ENCODE measurements at regions of chr10 and their contacts with region 1.

Region 1: DNA sequence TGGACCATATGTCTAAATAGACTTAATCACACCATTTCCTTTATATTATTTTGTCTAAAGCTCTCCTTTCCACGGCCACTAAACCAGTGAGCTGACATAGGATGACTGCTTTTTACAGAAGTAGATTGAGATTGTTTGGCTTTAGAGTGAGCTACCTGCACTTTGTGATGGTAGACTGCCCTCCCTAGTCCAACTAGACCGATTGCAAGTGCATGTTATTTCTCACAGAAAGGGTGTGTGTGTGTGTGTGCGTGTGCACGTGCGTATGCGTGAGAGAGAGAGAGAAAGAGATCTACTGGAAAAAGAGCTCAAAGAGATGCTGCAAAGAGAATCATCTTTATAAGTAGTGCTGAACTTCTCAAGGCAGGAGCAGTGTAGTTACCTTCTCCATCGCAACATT is 60.7 kb downstream of the VCL start:
- DNase-seq: peak; percentile 58
- ATAC-seq: peak; percentile 43
- H3K4me3 Mint-ChIP-seq: no peak overlapping the region
- H3K27ac Mint-ChIP-seq: no peak overlapping the region
- H3K4me1 Mint-ChIP-seq: peaks cover 31% of the 10 kb centered on the region
- H3K27me3 Mint-ChIP-seq: no peaks in the 10 kb centered on the region

Region 2: GRCh38 chr10:73906524-73907447 is 151.9 kb before region 1 on chr10:
- CTCF ChIA-PET with region 1: no interaction called
- POLR2A ChIA-PET with region 1: no interaction called
- intact Hi-C with region 1: no loop called
- DNase-seq: no peak
- ATAC-seq: no peak
- H3K4me3 Mint-ChIP-seq: no peak overlapping the region
- H3K27ac Mint-ChIP-seq: no peak overlapping the region
- H3K4me1 Mint-ChIP-seq: peaks cover 36% of the 10 kb centered on the region
- H3K27me3 Mint-ChIP-seq: peaks cover 33% of the 10 kb centered on the region

Region 3: DNA sequence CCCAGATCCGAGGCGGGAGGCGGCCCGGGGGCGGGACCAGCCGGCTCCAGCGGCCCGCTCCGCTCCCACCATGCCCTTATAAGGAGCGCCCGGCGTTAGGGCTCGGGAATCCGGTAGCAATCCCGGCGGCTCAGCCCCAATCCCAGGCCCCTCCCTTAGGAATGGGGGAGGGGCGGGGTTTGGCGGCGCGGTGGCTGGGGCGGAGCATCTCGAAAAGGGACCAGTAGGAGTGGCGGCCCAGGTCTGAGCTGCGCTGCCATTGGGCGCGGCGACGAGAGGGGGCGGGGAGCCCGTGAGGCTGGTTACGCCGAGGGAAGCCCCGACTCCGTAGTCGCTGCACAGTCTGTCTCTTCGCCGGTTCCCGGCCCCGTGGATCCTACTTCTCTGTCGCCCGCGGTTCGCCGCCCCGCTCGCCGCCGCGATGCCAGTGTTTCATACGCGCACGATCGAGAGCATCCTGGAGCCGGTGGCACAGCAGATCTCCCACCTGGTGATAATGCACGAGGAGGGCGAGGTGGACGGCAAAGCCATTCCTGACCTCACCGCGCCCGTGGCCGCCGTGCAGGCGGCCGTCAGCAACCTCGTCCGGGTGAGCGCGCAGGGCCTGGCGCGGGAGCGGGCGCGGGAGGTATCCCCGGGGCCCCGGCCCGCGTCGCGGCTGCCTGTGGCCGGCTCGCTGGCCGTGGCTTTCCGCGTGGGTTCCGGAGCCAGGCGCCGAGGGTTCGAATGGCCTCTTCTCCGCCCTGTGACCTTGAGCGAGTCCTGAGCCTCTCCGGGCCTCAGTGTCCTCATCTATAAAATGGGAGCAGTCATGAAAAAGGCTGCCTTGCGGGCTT is 60.7 kb before region 1 on chr10 and contains the start of gene VCL:
- CTCF ChIA-PET with region 1: interaction called, 3 read pairs
- POLR2A ChIA-PET with region 1: no interaction called
- intact Hi-C with region 1: loop called (anchors 2 to 5 kb)
- DNase-seq: peak; percentile 97
- ATAC-seq: peak; percentile 98
- H3K4me3 Mint-ChIP-seq: peak within 1 kb of the TSS; percentile 89
- H3K27ac Mint-ChIP-seq: peak within 1 kb of the TSS; percentile 97
- H3K4me1 Mint-ChIP-seq: peaks cover 39% of the 10 kb centered on the region
- H3K27me3 Mint-ChIP-seq: no peaks in the 10 kb centered on the region
- total RNA-seq, gene VCL: 20.7 to 22.7 TPM

Region 4: GRCh38 chr10:74021248-74022055 is 37.2 kb before region 1 on chr10:
- CTCF ChIA-PET with region 1: interaction called, 3 read pairs
- POLR2A ChIA-PET with region 1: no interaction called
- intact Hi-C with region 1: loop called (anchors 2 to 5 kb)
- DNase-seq: no peak
- ATAC-seq: peak; percentile 70
- H3K4me3 Mint-ChIP-seq: no peak overlapping the region
- H3K27ac Mint-ChIP-seq: peak overlapping the region; percentile 82
- H3K4me1 Mint-ChIP-seq: peaks cover 34% of the 10 kb centered on the region
- H3K27me3 Mint-ChIP-seq: no peaks in the 10 kb centered on the region

Region 5: GRCh38 chr10:74118804-74119203 is 60.1 kb after region 1 on chr10:
- CTCF ChIA-PET with region 1: no interaction called
- POLR2A ChIA-PET with region 1: no interaction called
- intact Hi-C with region 1: no loop called
- DNase-seq: no peak
- ATAC-seq: no peak
- H3K4me3 Mint-ChIP-seq: no peak overlapping the region
- H3K27ac Mint-ChIP-seq: peak overlapping the region; percentile 81
- H3K4me1 Mint-ChIP-seq: peaks cover 10% of the 10 kb centered on the region
- H3K27me3 Mint-ChIP-seq: no peaks in the 10 kb centered on the region

Measured in activated CD4-positive, alpha-beta T cell treated with anti-CD3 and anti-CD28 coated beads for 36 hours (primary cell).